Head of caudate nucleus (tissue), 42 donors: ENCODE measurements at regions of chr5 and their contacts with region 1.

Region 1: DNA sequence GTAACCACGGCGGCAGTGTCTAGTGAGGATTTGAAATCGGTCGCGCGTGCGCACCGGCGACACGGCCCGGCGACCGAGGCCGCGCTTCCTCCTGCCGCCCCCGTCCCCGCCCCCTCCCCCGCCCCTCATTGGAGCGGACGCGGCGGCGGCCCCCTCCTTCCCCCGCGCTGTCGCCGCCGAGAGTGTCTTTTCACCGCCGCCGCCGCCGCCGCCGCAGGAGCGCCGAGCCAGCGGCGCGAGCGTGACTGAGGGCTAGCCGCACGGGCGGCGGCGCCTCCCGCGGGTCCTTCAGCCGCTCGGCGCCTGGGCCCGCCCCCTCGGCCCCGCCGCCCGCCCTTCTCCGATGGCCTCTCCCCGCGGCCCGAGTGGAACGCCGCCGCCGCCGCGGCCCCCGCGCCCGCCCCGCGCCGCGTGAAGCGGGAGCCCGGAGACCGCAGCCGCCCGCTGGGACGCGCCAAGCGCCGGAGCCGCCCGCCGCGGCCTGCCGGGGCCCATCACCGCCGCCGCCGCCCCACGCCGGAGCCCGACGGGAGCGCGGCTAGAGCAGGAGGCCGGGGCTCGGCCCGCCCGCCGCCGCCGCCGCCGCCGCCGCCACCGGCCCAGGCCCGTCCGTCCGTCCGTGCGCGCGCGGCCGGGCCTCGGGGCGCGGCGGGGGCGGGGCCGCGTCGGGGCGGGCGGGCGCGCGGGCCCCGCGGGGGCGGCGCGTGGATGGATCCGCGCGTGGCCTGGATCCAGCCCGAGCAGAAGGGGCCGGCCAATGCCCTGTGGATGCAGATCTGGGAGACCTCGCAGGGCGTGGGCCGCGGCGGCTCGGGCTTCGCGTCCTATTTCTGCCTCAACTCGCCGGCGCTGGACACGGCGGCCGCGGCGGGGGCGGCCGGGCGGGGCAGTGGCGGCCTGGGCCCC is at the start of gene TENT4A:
- DNase-seq: peak in 25 of 42 donors; percentile 30 to 73 (median 51)

Region 2: GRCh38 chr5:6632917-6633468 is 80.5 kb before region 1 on chr5 and contains the starts of genes NSUN2 and SRD5A1:
- intact Hi-C with region 1: loop called (anchors 2 kb)
- DNase-seq: peak; percentile 79 to 96 (median 92)